ENCODE measurements at regions of chr12 and their contacts with region 1.

Region 1: DNA sequence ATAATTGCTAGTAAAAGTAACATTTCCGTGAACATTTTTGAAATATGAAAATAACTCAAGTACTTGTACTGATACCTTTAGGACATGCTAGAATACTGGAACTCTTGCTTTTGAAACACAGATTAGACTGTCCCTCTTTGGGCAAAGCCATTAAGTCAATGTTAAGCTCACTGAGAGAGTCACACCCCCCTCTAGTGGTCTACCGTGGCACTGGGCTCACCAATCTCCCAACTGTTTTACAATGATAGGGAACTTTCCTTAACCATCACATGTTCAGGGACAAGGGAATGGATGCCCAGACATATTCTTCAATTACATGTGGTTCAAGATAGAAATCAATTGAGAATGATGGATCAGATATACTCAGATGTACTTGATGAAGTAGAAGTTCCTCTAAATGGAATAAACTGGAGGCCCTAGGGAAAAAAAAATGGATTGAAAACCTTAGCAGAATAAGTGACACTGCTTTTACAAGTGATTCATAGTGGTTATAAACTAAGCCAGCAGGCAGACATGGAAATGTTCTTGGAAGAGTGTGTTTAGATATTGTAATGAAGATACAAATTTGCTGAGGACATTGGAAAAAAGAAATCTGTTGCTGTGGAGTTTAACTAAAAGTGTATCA is 17.8 kb downstream of the NANOG start:
- DNase-seq: peak; percentile 59 to 76 (median 72)
- ATAC-seq: peak; percentile 90
- H3K4me3 ChIP-seq: no peak overlapping the region
- H3K27ac ChIP-seq: no peak overlapping the region
- H3K4me1 ChIP-seq: no peaks in the 10 kb centered on the region
- H3K27me3 ChIP-seq: peaks cover 3 to 7% of the 10 kb centered on the region in 2 experiments; a peak in 3 of 5 replicates
- CTCF ChIP-seq: peak; percentile 76 to 82 (median 82)
- EP300 ChIP-seq: no peak
- POLR2A ChIP-seq: no peak
- RAD21 ChIP-seq: peak; percentile 88 to 90

Region 2: DNA sequence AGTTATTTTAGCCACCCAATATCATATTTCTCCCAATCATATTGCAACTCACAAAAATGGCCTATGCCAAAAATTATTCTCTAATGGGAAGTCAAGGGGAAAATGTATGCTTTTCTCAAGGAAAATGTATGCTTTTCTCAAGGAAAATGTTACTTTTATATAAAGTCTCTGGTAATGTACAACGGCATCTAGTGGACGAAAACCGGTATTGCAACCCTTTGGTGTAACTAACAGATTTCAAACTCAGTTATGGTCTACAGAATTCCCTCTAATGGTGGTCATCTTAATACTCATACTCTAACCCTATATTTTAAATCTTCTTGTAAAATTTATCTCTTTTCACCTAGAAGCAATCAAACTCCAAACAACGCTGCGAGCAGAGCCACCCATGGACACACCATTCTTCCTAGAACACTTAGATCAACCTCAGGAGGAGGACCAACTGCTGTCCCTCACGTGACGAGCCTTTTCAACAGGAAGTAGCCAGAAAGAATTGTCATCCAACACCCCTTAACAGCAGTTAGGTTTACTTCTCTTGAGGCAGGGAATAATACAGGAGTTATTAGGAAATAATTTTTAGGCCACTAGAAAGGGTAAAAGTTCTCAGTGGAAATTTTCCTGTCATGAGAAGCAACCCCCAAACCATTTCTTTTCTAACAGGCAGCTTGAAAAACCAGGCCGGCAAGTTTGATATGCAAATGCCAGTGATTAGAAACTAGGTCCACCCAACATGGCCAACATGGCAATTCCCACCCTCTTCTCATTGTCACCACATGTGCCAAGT is 161.4 kb before region 1 on chr12:
- CTCF ChIA-PET with region 1: no interaction called
- POLR2A ChIA-PET with region 1: no interaction called
- in situ Hi-C with region 1: no loop called
- intact Hi-C with region 1: loop called (anchors 10 kb)
- DNase-seq: peak; percentile 25 to 35 (median 28)
- ATAC-seq: no peak
- H3K4me3 ChIP-seq: no peak overlapping the region
- H3K27ac ChIP-seq: no peak overlapping the region
- H3K4me1 ChIP-seq: no peaks in the 10 kb centered on the region; a peak in 1 of 5 replicates
- H3K27me3 ChIP-seq: no peaks in the 10 kb centered on the region; a peak in 1 of 5 replicates
- CTCF ChIP-seq: peak; percentile 25 to 69 (median 50); a peak in 4 of 6 replicates
- EP300 ChIP-seq: no peak
- POLR2A ChIP-seq: no peak
- RAD21 ChIP-seq: no peak; a peak in 1 of 4 replicates

Region 3: GRCh38 chr12:7678738-7679137 is 128.2 kb before region 1 on chr12:
- CTCF ChIA-PET with region 1: interaction called, 6 read pairs
- POLR2A ChIA-PET with region 1: no interaction called
- in situ Hi-C with region 1: loop called (anchors 10 kb)
- intact Hi-C with region 1: loop called (anchors 1 kb)
- DNase-seq: no peak
- ATAC-seq: no peak
- H3K4me3 ChIP-seq: no peak overlapping the region
- H3K27ac ChIP-seq: no peak overlapping the region
- H3K4me1 ChIP-seq: no peaks in the 10 kb centered on the region; a peak in 1 of 5 replicates
- H3K27me3 ChIP-seq: peaks cover 0 to 4% of the 10 kb centered on the region in 2 experiments; a peak in 1 of 5 replicates
- CTCF ChIP-seq: no peak
- EP300 ChIP-seq: no peak
- POLR2A ChIP-seq: no peak
- RAD21 ChIP-seq: no peak

Region 4: DNA sequence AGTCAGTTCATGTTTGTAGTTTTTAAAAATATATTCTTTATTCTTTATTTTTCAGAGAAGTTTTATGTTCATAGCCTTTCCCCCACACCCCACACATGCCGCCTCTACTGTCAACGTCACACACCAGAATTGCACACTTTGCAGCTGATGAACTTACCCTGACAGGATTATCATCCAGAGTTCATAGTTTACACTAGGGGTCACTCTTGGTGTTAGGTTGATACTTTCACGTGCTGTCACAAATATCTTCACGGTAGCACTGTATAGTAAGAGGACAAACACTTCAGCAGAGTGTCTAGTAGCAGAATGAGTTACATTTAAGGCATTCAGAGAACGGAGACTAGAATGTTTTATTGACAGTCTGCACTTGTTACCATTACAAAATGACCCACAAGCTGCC is 90.6 kb before region 1 on chr12:
- CTCF ChIA-PET with region 1: no interaction called
- POLR2A ChIA-PET with region 1: no interaction called
- in situ Hi-C with region 1: loop called (anchors 10 kb)
- intact Hi-C with region 1: loop called (anchors 5 kb)
- DNase-seq: peak in 3 of 4 experiments; percentile 10 to 20 (median 14)
- ATAC-seq: peak; percentile 63
- H3K4me3 ChIP-seq: no peak overlapping the region
- H3K27ac ChIP-seq: no peak overlapping the region
- H3K4me1 ChIP-seq: peaks cover 0 to 3% of the 10 kb centered on the region in 2 experiments; a peak in 1 of 5 replicates
- H3K27me3 ChIP-seq: no peaks in the 10 kb centered on the region; a peak in 2 of 5 replicates
- CTCF ChIP-seq: peak in 2 of 3 experiments; percentile 38 to 48; a peak in 2 of 6 replicates
- EP300 ChIP-seq: no peak
- POLR2A ChIP-seq: no peak
- RAD21 ChIP-seq: peak; percentile 43 to 46

Region 5: GRCh38 chr12:7729746-7730145 is 77.2 kb before region 1 on chr12:
- CTCF ChIA-PET with region 1: no interaction called
- POLR2A ChIA-PET with region 1: no interaction called
- in situ Hi-C with region 1: loop called (anchors 10 kb)
- intact Hi-C with region 1: no loop called
- DNase-seq: no peak
- ATAC-seq: no peak
- H3K4me3 ChIP-seq: no peak overlapping the region
- H3K27ac ChIP-seq: no peak overlapping the region
- H3K4me1 ChIP-seq: 0 out of 5 replicates have a peak, but pooled peaks cover 0 to 3% of the 10 kb centered on the region in 2 experiments
- H3K27me3 ChIP-seq: no peaks in the 10 kb centered on the region; a peak in 1 of 5 replicates
- CTCF ChIP-seq: no peak
- EP300 ChIP-seq: no peak
- POLR2A ChIP-seq: no peak
- RAD21 ChIP-seq: no peak

Region 6: DNA sequence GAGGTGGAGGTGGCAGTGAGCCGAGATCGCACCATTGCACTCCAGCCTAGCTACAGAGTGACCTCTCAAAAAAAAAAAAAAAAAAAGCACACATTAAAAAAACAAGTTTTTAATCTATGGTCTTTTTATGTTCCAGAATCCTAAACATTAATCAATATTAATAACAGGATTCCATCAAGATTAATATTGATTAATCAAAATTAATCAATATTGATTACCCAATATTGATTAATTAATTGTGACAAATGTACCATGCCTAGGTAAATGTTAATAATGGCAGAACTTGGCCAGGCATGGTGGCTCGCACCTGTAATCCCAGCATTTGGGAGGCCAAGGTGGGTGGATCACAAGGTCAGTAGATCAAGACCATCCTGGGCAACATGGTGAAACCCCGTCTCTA is 25.7 kb before region 1 on chr12:
- CTCF ChIA-PET with region 1: no interaction called
- POLR2A ChIA-PET with region 1: no interaction called
- in situ Hi-C with region 1: no loop called
- intact Hi-C with region 1: no loop called
- DNase-seq: no peak
- ATAC-seq: no peak
- H3K4me3 ChIP-seq: no peak overlapping the region
- H3K27ac ChIP-seq: no peak overlapping the region
- H3K4me1 ChIP-seq: no peaks in the 10 kb centered on the region
- H3K27me3 ChIP-seq: peaks cover 0 to 6% of the 10 kb centered on the region in 2 experiments; a peak in 1 of 5 replicates
- CTCF ChIP-seq: no peak
- EP300 ChIP-seq: no peak
- POLR2A ChIP-seq: no peak
- RAD21 ChIP-seq: no peak

Region 7: DNA sequence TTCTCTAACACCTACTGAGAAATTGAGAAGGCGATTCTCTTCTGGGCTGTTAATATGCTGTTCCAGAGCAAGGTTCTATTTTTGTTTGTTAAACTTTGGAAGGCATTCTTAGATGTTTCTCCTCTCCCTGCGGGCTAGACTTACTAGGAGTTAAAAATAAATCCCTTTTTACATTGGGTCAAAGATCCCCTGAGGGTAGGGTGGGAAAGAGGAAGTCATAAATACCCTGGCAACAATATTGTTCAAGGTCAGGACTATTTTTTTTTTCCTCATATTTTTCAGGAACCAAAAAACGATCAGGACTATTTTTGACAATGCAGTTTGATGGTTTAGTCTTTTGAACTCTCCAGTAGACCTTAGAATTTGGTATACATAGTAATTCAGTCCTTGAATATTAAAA is 77.7 kb after region 1 on chr12:
- CTCF ChIA-PET with region 1: no interaction called
- POLR2A ChIA-PET with region 1: no interaction called
- in situ Hi-C with region 1: no loop called
- intact Hi-C with region 1: no loop called
- DNase-seq: no peak
- ATAC-seq: no peak
- H3K4me3 ChIP-seq: no peak overlapping the region
- H3K27ac ChIP-seq: no peak overlapping the region
- H3K4me1 ChIP-seq: no peaks in the 10 kb centered on the region
- H3K27me3 ChIP-seq: no peaks in the 10 kb centered on the region
- CTCF ChIP-seq: no peak
- EP300 ChIP-seq: no peak
- POLR2A ChIP-seq: no peak
- RAD21 ChIP-seq: no peak